GM12878 (cell line): ENCODE measurements at regions of chr2 and their contacts with region 1.

Region 1: DNA sequence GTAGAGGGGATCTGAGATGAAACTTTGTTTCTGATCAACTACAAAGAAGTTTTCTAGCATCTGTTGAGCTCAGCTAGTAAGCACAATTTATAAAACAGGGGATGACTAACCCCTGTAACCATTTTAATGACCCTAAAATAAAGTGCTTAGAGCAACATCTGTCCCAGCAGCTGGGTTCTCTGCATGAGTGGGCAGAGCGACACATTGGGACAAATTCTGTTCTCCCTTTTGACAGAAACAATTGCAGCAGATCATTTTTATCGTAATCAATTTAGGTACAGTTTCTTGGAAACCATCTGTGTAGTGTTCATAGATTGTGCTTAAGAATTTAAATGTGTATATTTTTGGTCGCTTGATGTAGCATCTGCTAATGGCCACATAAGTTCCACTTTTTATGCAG is 678.0 kb downstream of the RNF144A start:
- DNase-seq: no peak
- ATAC-seq: peak; percentile 17; the same call in 2 of the 3 replicates
- H3K4me3 ChIP-seq: no peak overlapping the region
- H3K27ac ChIP-seq: no peak overlapping the region
- H3K4me1 ChIP-seq: peaks cover 5% of the 10 kb centered on the region
- H3K27me3 ChIP-seq: no peaks in the 10 kb centered on the region
- CTCF ChIP-seq: no peak
- EP300 ChIP-seq: no peak
- POLR2A ChIP-seq: no peak
- RAD21 ChIP-seq: no peak

Region 2: DNA sequence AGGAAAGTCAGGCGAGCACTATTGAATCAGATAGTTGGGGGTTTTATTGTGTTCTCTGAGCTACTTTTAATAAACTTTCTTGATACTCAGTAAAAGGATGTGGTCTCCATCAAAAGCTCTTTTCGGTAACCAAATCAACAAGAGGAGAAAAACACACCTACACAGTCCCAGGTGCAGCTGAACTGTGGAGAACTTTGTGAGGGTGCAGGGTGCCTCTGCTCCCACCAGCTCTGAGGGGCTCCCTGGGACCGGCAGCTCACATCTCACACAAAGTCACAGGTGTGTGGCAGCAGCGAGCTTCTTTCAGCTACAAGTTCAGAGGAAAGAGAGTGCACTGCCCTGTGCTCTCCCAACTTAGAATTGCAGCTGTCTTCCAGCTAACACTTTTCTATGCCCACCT is 27.6 kb before region 1 on chr2:
- CTCF ChIA-PET with region 1: interaction called, 3 read pairs
- POLR2A ChIA-PET with region 1: no interaction called
- RAD21 ChIA-PET with region 1: interaction called, 11 read pairs
- SMC1A ChIA-PET with region 1: interaction called, 6 read pairs
- in situ Hi-C with region 1: no loop called
- intact Hi-C with region 1: no loop called
- DNase-seq: peak; percentile 39
- ATAC-seq: peak; percentile 94
- H3K4me3 ChIP-seq: no peak overlapping the region
- H3K27ac ChIP-seq: no peak overlapping the region
- H3K4me1 ChIP-seq: peaks cover 6% of the 10 kb centered on the region
- H3K27me3 ChIP-seq: no peaks in the 10 kb centered on the region; a peak in 1 of 4 replicates
- CTCF ChIP-seq: peak in 2 of 3 experiments; percentile 12 to 26; a peak in 2 of 6 replicates
- EP300 ChIP-seq: peak in 1 of 2 experiments; percentile 78; a peak in 2 of 4 replicates
- POLR2A ChIP-seq: no peak
- RAD21 ChIP-seq: no peak

Region 3: GRCh38 chr2:7609974-7610373 is 14.8 kb after region 1 on chr2:
- CTCF ChIA-PET with region 1: interaction called, 3 read pairs
- POLR2A ChIA-PET with region 1: interaction called, 3 read pairs
- RAD21 ChIA-PET with region 1: interaction called, 5 read pairs
- SMC1A ChIA-PET with region 1: interaction called, 17 read pairs
- in situ Hi-C with region 1: no loop called
- intact Hi-C with region 1: no loop called
- DNase-seq: no peak
- ATAC-seq: peak; percentile 81
- H3K4me3 ChIP-seq: no peak overlapping the region
- H3K27ac ChIP-seq: no peak overlapping the region
- H3K4me1 ChIP-seq: peaks cover 17% of the 10 kb centered on the region
- H3K27me3 ChIP-seq: no peaks in the 10 kb centered on the region
- CTCF ChIP-seq: no peak
- EP300 ChIP-seq: no peak
- POLR2A ChIP-seq: no peak
- RAD21 ChIP-seq: no peak

Region 4: GRCh38 chr2:7618031-7618430 is 22.8 kb after region 1 on chr2:
- CTCF ChIA-PET with region 1: interaction called, 4 read pairs
- POLR2A ChIA-PET with region 1: interaction called, 3 read pairs
- RAD21 ChIA-PET with region 1: no interaction called
- SMC1A ChIA-PET with region 1: interaction called, 13 read pairs
- in situ Hi-C with region 1: no loop called
- intact Hi-C with region 1: no loop called
- DNase-seq: no peak
- ATAC-seq: no peak
- H3K4me3 ChIP-seq: no peak overlapping the region
- H3K27ac ChIP-seq: no peak overlapping the region
- H3K4me1 ChIP-seq: no peaks in the 10 kb centered on the region
- H3K27me3 ChIP-seq: no peaks in the 10 kb centered on the region
- CTCF ChIP-seq: no peak
- EP300 ChIP-seq: no peak
- POLR2A ChIP-seq: no peak
- RAD21 ChIP-seq: no peak

Region 5: GRCh38 chr2:7633566-7634153 is 38.5 kb after region 1 on chr2:
- CTCF ChIA-PET with region 1: no interaction called
- POLR2A ChIA-PET with region 1: no interaction called
- RAD21 ChIA-PET with region 1: no interaction called
- SMC1A ChIA-PET with region 1: no interaction called
- in situ Hi-C with region 1: no loop called
- intact Hi-C with region 1: no loop called
- DNase-seq: no peak
- ATAC-seq: no peak
- H3K4me3 ChIP-seq: no peak overlapping the region
- H3K27ac ChIP-seq: no peak overlapping the region
- H3K4me1 ChIP-seq: no peaks in the 10 kb centered on the region
- H3K27me3 ChIP-seq: peaks cover 0 to 2% of the 10 kb centered on the region in 2 experiments; a peak in 1 of 4 replicates
- CTCF ChIP-seq: no peak
- EP300 ChIP-seq: no peak
- POLR2A ChIP-seq: no peak
- RAD21 ChIP-seq: no peak